ENCODE measurements at regions of chr1 and their contacts with region 1.

Region 1: GRCh38 chr1:212699104-212699624 is 476 bp downstream of the BATF3 start:
- DNase-seq: peak; percentile 11 to 69 (median 40)
- ATAC-seq: peak; percentile 79
- H3K4me3 ChIP-seq: peak overlapping the region; percentile 56
- H3K4me3 Mint-ChIP-seq: peak overlapping the region; percentile 79 to 90 (median 85)
- H3K27ac ChIP-seq: no peak overlapping the region
- H3K27ac Mint-ChIP-seq: peak overlapping the region in 7 of 9 donors; percentile 7 to 68 (median 47)
- H3K4me1 ChIP-seq: peaks cover 9 to 20% of the 10 kb centered on the region in 2 donors
- H3K4me1 Mint-ChIP-seq: peaks cover 28 to 53% (median 46%) of the 10 kb centered on the region in 7 donors
- H3K27me3 ChIP-seq: no peaks in the 10 kb centered on the region
- H3K27me3 Mint-ChIP-seq: peaks cover 0 to 31% (median 5%) of the 10 kb centered on the region in 5 donors

Region 2: GRCh38 chr1:212558693-212559480 is 140.3 kb before region 1 on chr1:
- CTCF ChIA-PET with region 1: no interaction called
- POLR2A ChIA-PET with region 1: no interaction called
- intact Hi-C with region 1: loop called (anchors 2 to 5 kb)
- DNase-seq: peak; percentile 83 to 93 (median 91)
- ATAC-seq: peak; percentile 97
- H3K4me3 ChIP-seq: peak overlapping the region; percentile 54
- H3K4me3 Mint-ChIP-seq: peak overlapping the region; percentile 82 to 95 (median 90)
- H3K27ac ChIP-seq: peak overlapping the region; percentile 74
- H3K27ac Mint-ChIP-seq: peak overlapping the region; percentile 91 to 99 (median 98)
- H3K4me1 ChIP-seq: peaks cover 7 to 13% of the 10 kb centered on the region in 2 donors
- H3K4me1 Mint-ChIP-seq: peaks cover 6 to 15% (median 9%) of the 10 kb centered on the region in 7 donors
- H3K27me3 ChIP-seq: no peaks in the 10 kb centered on the region
- H3K27me3 Mint-ChIP-seq: peaks cover 0 to 45% (median 0%) of the 10 kb centered on the region in 5 donors

Region 3: DNA sequence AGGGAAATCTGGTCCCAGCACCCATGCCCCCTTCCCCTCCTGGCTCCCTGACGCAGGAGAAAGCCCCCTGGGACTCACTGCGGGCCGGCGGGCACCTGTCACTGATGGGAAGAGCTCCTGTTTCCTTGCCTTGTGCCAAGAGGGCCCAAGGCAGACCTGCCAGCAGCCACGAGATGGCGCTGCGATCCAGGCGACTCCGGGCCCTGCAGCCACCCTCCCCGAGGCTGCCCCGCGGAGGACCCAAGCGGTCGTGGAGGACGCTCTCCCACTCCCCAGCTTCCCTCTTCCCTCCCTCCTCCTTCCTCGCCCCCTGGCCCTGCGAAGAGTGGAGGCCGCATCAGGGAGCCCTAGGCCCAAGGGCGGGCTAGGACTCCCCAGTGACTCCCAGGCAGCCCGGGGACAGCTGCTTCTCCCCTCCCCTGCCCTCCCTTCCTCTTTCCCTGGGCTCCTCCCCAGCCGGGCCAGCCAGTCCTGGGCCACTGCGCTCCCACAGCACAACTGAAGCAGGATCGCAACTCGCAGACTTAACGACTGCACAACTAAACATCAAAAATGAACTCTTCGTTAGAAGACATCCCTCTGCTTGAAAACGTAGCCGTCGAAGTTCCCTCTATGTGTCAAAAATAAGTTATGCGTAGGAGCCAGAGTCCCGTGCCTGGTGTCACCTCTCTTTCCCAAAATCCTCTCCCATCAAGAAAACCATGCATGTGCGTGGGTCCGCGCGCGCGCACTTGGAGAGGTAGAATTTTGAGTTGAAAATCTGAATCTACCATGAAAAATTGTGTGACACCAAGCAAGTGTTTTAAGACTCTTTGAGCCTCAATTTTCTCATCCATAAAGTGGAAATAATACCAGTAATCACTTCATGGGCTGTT is 33.7 kb before region 1 on chr1:
- CTCF ChIA-PET with region 1: interaction called, 5 read pairs
- POLR2A ChIA-PET with region 1: no interaction called
- intact Hi-C with region 1: loop called (anchors 1 kb)
- DNase-seq: peak; percentile 57 to 85 (median 78)
- ATAC-seq: peak; percentile 94
- H3K4me3 ChIP-seq: peak overlapping the region; percentile 51
- H3K4me3 Mint-ChIP-seq: peak overlapping the region; percentile 78 to 92 (median 84)
- H3K27ac ChIP-seq: no peak overlapping the region
- H3K27ac Mint-ChIP-seq: peak overlapping the region in 1 of 9 donors; percentile 64
- H3K4me1 ChIP-seq: peaks cover 0 to 6% of the 10 kb centered on the region in 2 donors
- H3K4me1 Mint-ChIP-seq: peaks cover 4 to 29% (median 5%) of the 10 kb centered on the region in 7 donors
- H3K27me3 ChIP-seq: no peaks in the 10 kb centered on the region
- H3K27me3 Mint-ChIP-seq: peaks cover 0 to 23% (median 10%) of the 10 kb centered on the region in 5 donors

Region 4: DNA sequence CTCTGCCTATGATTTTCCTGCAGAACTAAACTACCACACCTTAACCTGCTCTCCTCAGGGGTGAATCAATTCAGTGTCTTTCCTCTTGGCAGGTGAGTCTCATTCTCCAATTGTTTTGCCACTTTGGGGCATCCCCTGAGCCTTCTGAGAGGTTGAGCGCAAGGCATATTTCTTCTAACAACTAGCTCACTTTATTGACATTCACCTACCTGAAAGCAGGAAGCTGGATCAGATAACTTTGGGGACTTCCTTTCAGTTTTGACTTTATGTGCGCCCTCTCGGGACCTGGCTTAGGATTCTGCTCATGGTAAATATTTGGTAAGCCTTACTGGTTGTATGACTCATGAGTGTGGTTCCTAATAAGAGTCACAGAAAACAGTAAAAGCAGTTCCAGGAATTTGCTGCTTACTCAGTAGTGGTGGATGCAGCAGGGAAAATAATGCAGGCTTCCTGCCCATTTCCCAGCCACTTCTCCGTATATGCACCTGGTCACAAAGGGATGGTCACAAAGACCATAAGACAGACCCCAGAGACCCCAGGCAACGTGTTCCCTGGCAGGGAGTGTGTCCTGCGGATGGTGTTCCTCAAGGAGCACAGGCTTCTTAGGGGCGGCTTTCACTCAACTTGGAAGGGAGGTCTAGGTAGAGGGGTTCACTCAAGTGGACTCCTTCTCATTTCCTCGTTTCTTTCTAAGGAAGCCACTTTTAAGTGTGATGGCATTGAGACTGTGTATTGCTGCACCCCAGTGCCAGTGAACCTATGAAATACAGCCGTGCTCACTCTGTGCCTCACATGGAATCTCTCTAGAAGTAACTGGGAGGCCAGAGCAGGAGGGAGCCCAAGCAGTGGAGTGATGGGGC is 22.5 kb after region 1 on chr1:
- CTCF ChIA-PET with region 1: interaction called, 3 read pairs
- POLR2A ChIA-PET with region 1: interaction called, 3 read pairs
- intact Hi-C with region 1: loop called in 1 of 2 experiments (anchors 2 kb)
- DNase-seq: peak in 1 of 9 donors; percentile 41
- ATAC-seq: no peak
- H3K4me3 ChIP-seq: no peak overlapping the region
- H3K4me3 Mint-ChIP-seq: peak overlapping the region in 1 of 10 donors; percentile 72
- H3K27ac ChIP-seq: no peak overlapping the region
- H3K27ac Mint-ChIP-seq: peak overlapping the region in 2 of 9 donors; percentile 10 to 70
- H3K4me1 ChIP-seq: no peaks in the 10 kb centered on the region
- H3K4me1 Mint-ChIP-seq: peaks cover 0 to 37% (median 7%) of the 10 kb centered on the region in 7 donors
- H3K27me3 ChIP-seq: no peaks in the 10 kb centered on the region
- H3K27me3 Mint-ChIP-seq: peaks cover 0 to 18% (median 6%) of the 10 kb centered on the region in 5 donors

Region 5: DNA sequence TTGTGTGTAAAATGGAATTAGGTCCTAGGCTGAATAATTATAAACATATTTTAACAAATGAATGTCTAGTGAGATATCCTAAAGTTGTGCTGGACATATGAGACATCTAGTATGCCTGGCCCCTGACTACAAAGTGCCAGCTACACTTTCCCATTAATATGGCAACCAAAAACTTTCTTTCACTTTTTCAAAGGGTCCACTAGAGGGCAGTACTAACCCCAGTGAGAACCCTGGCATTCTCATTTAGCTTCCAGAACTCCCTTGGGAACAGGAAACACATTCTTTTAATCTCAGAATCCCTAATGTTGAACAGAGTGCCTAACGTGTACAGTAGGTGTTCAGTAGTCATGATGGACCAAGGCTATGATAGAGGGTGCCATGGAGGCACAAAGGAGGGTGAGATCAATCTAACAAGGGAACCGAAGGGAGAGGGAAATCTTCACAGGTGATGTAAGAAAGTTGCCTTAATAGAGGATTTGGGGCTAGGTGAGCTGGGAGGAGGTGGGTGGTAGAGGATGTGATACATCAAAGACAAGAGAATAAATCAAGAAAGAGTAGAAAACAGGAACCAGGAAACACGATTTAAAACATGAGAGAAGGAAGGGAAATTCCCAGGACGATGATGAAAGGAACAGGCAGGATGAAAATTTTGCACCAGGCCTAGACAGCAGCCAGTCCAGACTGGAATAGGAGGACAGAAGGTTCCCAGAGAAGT is 50.8 kb after region 1 on chr1:
- CTCF ChIA-PET with region 1: interaction called, 6 read pairs
- POLR2A ChIA-PET with region 1: interaction called, 5 read pairs
- intact Hi-C with region 1: loop called (anchors 1 to 2 kb)
- DNase-seq: peak in 6 of 9 donors; percentile 3 to 30 (median 14)
- ATAC-seq: peak; percentile 58
- H3K4me3 ChIP-seq: no peak overlapping the region
- H3K4me3 Mint-ChIP-seq: peak overlapping the region; percentile 1 to 69 (median 48)
- H3K27ac ChIP-seq: peak overlapping the region; percentile 56
- H3K27ac Mint-ChIP-seq: peak overlapping the region; percentile 1 to 92 (median 88)
- H3K4me1 ChIP-seq: peaks cover 5 to 36% of the 10 kb centered on the region in 2 donors
- H3K4me1 Mint-ChIP-seq: peaks cover 36 to 73% (median 62%) of the 10 kb centered on the region in 7 donors
- H3K27me3 ChIP-seq: no peaks in the 10 kb centered on the region
- H3K27me3 Mint-ChIP-seq: no peaks in the 10 kb centered on the region

Region 6: GRCh38 chr1:212782422-212783154 is 83.4 kb after region 1 on chr1:
- CTCF ChIA-PET with region 1: interaction called, 3 read pairs
- POLR2A ChIA-PET with region 1: interaction called, 3 read pairs
- intact Hi-C with region 1: loop called (anchors 1 kb)
- DNase-seq: peak in 6 of 9 donors; percentile 4 to 45 (median 34)
- ATAC-seq: peak; percentile 73
- H3K4me3 ChIP-seq: no peak overlapping the region
- H3K4me3 Mint-ChIP-seq: no peak overlapping the region
- H3K27ac ChIP-seq: no peak overlapping the region
- H3K27ac Mint-ChIP-seq: peak overlapping the region in 1 of 9 donors; percentile 31
- H3K4me1 ChIP-seq: no peaks in the 10 kb centered on the region
- H3K4me1 Mint-ChIP-seq: peaks cover 0 to 18% (median 6%) of the 10 kb centered on the region in 7 donors
- H3K27me3 ChIP-seq: no peaks in the 10 kb centered on the region
- H3K27me3 Mint-ChIP-seq: no peaks in the 10 kb centered on the region

Region 7: DNA sequence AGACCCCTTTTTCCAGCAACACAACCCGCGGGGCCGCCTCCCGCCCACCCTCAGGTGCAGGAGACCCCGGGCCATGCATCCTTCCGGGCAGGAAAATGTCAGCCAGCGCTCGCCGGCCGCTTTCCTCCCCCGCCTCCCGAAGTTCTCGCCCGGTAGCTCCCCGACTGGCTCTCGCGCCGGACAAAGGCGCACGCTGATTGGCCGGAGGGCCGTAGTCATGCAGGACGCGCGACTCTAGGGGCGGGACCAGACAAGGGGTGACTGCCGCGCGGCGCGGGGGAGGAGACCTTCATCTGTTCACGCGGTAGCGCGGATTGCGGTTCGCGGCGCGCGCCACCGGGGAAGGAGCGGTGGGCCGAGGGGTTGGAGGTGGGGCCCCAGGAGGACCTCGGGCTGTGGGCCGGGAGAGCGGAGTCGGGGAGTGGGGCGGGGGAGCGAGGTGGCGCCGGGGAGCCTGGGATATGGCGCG is 158.9 kb after region 1 on chr1 and contains the start of gene FLVCR1:
- CTCF ChIA-PET with region 1: no interaction called
- POLR2A ChIA-PET with region 1: no interaction called
- intact Hi-C with region 1: loop called in 1 of 2 experiments (anchors 2 kb)
- DNase-seq: peak; percentile 74 to 96 (median 80)
- ATAC-seq: peak; percentile 99
- H3K4me3 ChIP-seq: peak within 1 kb of the TSS; percentile 72
- H3K4me3 Mint-ChIP-seq: peak within 1 kb of the TSS in 6 of 10 donors; percentile 95 to 97 (median 96)
- H3K27ac ChIP-seq: peak within 1 kb of the TSS; percentile 68
- H3K27ac Mint-ChIP-seq: peak within 1 kb of the TSS; percentile 77 to 96 (median 89)
- H3K4me1 ChIP-seq: peaks cover 9 to 16% of the 10 kb centered on the region in 2 donors
- H3K4me1 Mint-ChIP-seq: peaks cover 9 to 34% (median 21%) of the 10 kb centered on the region in 7 donors
- H3K27me3 ChIP-seq: no peaks in the 10 kb centered on the region
- H3K27me3 Mint-ChIP-seq: no peaks in the 10 kb centered on the region
- total RNA-seq, gene FLVCR1: 7.4 to 12.2 (median 8.2) TPM

Measured in naive thymus-derived CD4-positive, alpha-beta T cell (primary cell).